ENCODE measurements at regions of chr10 and their contacts with region 1.

Region 1: DNA sequence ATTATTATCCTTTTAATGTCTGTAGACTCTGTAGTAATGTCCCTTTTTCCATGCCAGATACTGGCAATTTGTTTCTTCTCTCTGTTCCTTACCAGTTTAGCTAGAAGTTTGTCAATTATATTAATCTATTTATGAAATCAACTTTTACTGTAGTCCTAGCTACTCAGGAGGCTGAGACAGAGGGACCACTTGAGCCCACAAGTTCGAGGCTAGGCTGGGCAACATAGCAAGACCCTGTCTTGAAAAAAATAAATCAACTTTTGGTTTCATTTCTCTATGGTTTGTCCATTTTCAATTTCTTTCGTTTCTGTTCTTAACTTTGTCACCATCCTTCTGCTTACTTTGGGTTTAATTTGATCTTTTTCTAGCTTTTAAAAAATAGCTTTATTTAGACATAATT is 42.5 kb upstream of the PLA2G12B start:
- DNase-seq: no peak
- ATAC-seq: no peak
- H3K4me3 ChIP-seq: no peak overlapping the region
- H3K27ac ChIP-seq: no peak overlapping the region
- H3K4me1 ChIP-seq: no peaks in the 10 kb centered on the region
- H3K27me3 ChIP-seq: no peaks in the 10 kb centered on the region
- CTCF ChIP-seq: no peak

Region 2: GRCh38 chr10:73039635-73040034 is 42.5 kb after region 1 on chr10:
- CTCF ChIA-PET with region 1: interaction called, 11 read pairs
- POLR2A ChIA-PET with region 1: interaction called, 3 read pairs
- in situ Hi-C with region 1: no loop called
- intact Hi-C with region 1: no loop called
- DNase-seq: no peak
- ATAC-seq: no peak
- H3K4me3 ChIP-seq: no peak overlapping the region
- H3K27ac ChIP-seq: no peak overlapping the region
- H3K4me1 ChIP-seq: peaks cover 5% of the 10 kb centered on the region
- H3K27me3 ChIP-seq: no peaks in the 10 kb centered on the region
- CTCF ChIP-seq: no peak

Measured in Panc1 (cell line).